ENCODE measurements at regions of chr2 and their contacts with region 1.

Region 1: GRCh38 chr2:134118279-134119116 is 135.4 kb upstream of the MGAT5 start:
- DNase-seq: peak; percentile 96
- ATAC-seq: peak; percentile 62
- H3K4me3 ChIP-seq: peak overlapping the region; percentile 92
- H3K27ac ChIP-seq: peak overlapping the region; percentile 77
- H3K4me1 ChIP-seq: peaks cover 19% of the 10 kb centered on the region
- H3K27me3 ChIP-seq: no peaks in the 10 kb centered on the region
- CTCF ChIP-seq: peak; percentile 58 to 91 (median 80); a peak in 5 of 6 replicates
- EP300 ChIP-seq: peak; percentile 80 to 88
- POLR2A ChIP-seq: no peak
- RAD21 ChIP-seq: peak; percentile 99

Region 2: DNA sequence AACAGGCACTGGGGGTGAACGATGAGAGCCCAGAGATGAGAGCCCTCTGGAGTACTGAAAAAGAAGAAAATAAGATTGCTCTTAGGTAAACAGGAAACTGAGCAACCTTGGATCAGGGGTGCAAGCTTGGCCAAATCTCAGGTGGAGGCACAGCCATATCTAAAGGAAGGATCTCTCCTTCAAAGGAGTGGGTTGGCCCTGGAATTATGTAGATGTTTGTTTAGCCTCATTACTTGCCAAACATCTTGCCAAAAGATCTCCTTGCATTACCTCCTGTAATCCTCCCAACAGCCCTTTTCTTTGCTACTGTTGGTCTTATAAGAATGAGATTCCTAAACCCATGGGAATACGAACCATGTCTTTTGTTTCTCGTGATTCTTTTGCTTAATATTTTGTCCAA is 217.6 kb before region 1 on chr2:
- CTCF ChIA-PET with region 1: no interaction called
- POLR2A ChIA-PET with region 1: no interaction called
- RAD21 ChIA-PET with region 1: no interaction called
- SMC1A ChIA-PET with region 1: no interaction called
- in situ Hi-C with region 1: no loop called
- intact Hi-C with region 1: no loop called
- DNase-seq: no peak
- ATAC-seq: no peak
- H3K4me3 ChIP-seq: no peak overlapping the region
- H3K27ac ChIP-seq: no peak overlapping the region
- H3K4me1 ChIP-seq: no peaks in the 10 kb centered on the region
- H3K27me3 ChIP-seq: no peaks in the 10 kb centered on the region
- CTCF ChIP-seq: no peak
- EP300 ChIP-seq: no peak
- POLR2A ChIP-seq: no peak
- RAD21 ChIP-seq: no peak

Region 3: DNA sequence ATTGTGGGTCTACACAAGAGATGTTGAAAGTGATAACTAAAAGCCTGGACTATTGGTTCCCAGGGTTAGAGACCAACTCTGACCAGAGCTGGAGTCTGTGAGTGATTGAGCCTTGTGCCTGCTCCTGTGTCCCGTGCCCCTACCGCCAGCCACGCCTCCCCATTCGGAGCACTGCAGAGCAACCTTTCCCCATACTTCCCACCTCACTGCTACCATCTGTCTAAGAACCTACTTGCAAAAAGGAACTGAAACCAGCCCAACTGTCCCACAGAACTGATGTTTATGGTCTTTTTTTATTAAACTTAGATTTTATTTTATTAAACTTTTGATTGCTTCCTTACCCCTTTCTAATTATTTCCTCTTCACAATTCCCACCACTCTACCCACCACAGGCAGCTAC is 165.0 kb before region 1 on chr2:
- CTCF ChIA-PET with region 1: interaction called, 3 read pairs
- POLR2A ChIA-PET with region 1: no interaction called
- RAD21 ChIA-PET with region 1: interaction called, 7 read pairs
- SMC1A ChIA-PET with region 1: interaction called, 3 read pairs
- in situ Hi-C with region 1: no loop called
- intact Hi-C with region 1: loop called (anchors 2 kb)
- DNase-seq: peak; percentile 51
- ATAC-seq: peak; percentile 81
- H3K4me3 ChIP-seq: no peak overlapping the region
- H3K27ac ChIP-seq: peak overlapping the region; percentile 27; the same call in 1 of the 2 replicates
- H3K4me1 ChIP-seq: peaks cover 46% of the 10 kb centered on the region
- H3K27me3 ChIP-seq: no peaks in the 10 kb centered on the region
- CTCF ChIP-seq: no peak
- EP300 ChIP-seq: no peak
- POLR2A ChIP-seq: no peak
- RAD21 ChIP-seq: no peak

Region 4: DNA sequence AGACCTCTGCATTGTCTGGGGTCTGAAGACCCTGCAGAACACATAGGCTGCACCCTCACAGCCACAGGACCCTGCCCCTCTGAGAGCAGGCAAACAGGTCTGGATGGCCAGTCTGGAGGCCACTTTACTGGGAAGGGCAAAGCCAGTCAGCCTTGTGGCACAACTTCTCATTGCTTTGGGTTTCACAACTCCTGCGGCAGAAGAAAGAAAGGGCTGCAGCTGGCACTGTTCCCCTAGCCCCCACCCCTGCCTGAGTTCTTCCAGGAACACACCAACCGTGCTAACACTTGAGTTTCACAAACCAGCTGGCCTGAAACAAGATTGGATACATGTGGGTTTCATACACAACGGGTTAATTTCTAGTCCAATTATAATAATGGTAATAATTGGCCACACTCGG is 141.1 kb before region 1 on chr2:
- CTCF ChIA-PET with region 1: no interaction called
- POLR2A ChIA-PET with region 1: no interaction called
- RAD21 ChIA-PET with region 1: no interaction called
- SMC1A ChIA-PET with region 1: no interaction called
- in situ Hi-C with region 1: no loop called
- intact Hi-C with region 1: no loop called
- DNase-seq: no peak
- ATAC-seq: no peak
- H3K4me3 ChIP-seq: no peak overlapping the region
- H3K27ac ChIP-seq: no peak overlapping the region
- H3K4me1 ChIP-seq: no peaks in the 10 kb centered on the region
- H3K27me3 ChIP-seq: no peaks in the 10 kb centered on the region; a peak in 1 of 4 replicates
- CTCF ChIP-seq: no peak
- EP300 ChIP-seq: no peak
- POLR2A ChIP-seq: no peak
- RAD21 ChIP-seq: no peak

Region 5: DNA sequence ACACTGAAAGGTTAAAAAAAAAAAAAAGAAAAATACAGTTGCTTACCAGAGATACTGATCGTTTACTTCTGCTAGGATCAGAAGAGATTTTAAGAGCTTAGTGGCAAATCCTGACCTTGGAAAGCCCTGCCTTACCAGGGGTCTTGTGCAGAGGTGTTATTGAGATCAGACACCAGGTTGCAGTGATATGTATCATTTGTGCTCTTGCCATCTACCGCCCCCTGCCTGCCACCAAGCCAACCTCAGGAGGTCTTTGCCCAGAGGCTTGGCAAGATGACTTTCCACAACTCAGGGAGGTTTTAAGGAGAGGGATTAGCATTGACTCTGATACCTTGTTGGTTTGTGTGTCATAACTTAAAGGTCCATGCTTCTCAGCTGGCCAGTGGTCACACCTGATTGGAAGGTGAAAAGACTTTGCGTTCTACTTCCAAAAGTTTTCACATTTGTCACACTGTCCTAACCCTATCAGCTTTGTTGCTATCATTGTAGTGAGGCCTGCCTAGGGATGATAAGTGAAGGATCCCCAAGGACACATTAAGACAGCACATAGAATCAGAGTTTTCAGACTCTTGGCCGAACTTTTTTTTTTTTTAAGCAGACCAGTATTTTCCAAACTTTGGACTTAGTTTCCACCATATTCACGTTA is 89.2 kb after region 1 on chr2:
- CTCF ChIA-PET with region 1: interaction called, 164 read pairs
- POLR2A ChIA-PET with region 1: interaction called, 4 read pairs
- RAD21 ChIA-PET with region 1: interaction called, 86 read pairs
- SMC1A ChIA-PET with region 1: interaction called, 84 read pairs
- in situ Hi-C with region 1: loop called (anchors 5 kb)
- intact Hi-C with region 1: loop called (anchors 5 kb)
- DNase-seq: no peak
- ATAC-seq: peak; percentile 99
- H3K4me3 ChIP-seq: no peak overlapping the region
- H3K27ac ChIP-seq: no peak overlapping the region
- H3K4me1 ChIP-seq: peaks cover 33% of the 10 kb centered on the region
- H3K27me3 ChIP-seq: no peaks in the 10 kb centered on the region
- CTCF ChIP-seq: peak; percentile 75 to 79 (median 78)
- EP300 ChIP-seq: no peak
- POLR2A ChIP-seq: no peak
- RAD21 ChIP-seq: peak; percentile 88

Region 6: GRCh38 chr2:134245340-134245984 is 127.0 kb after region 1 on chr2:
- CTCF ChIA-PET with region 1: interaction called, 173 read pairs
- POLR2A ChIA-PET with region 1: interaction called, 9 read pairs
- RAD21 ChIA-PET with region 1: interaction called, 113 read pairs
- SMC1A ChIA-PET with region 1: interaction called, 100 read pairs
- in situ Hi-C with region 1: loop called (anchors 5 kb)
- intact Hi-C with region 1: loop called (anchors 1 kb)
- DNase-seq: no peak
- ATAC-seq: peak; percentile 65
- H3K4me3 ChIP-seq: no peak overlapping the region; the same call in 1 of the 2 replicates
- H3K27ac ChIP-seq: peak overlapping the region; percentile 54
- H3K4me1 ChIP-seq: peaks cover 66% of the 10 kb centered on the region
- H3K27me3 ChIP-seq: no peaks in the 10 kb centered on the region
- CTCF ChIP-seq: peak; percentile 78 to 86 (median 80)
- EP300 ChIP-seq: no peak
- POLR2A ChIP-seq: no peak
- RAD21 ChIP-seq: peak; percentile 75

Region 7: GRCh38 chr2:134275058-134275862 is 156.8 kb after region 1 on chr2:
- CTCF ChIA-PET with region 1: interaction called, 14 read pairs
- POLR2A ChIA-PET with region 1: no interaction called
- RAD21 ChIA-PET with region 1: interaction called, 15 read pairs
- SMC1A ChIA-PET with region 1: interaction called, 21 read pairs
- in situ Hi-C with region 1: no loop called
- intact Hi-C with region 1: no loop called
- DNase-seq: peak; percentile 95
- ATAC-seq: peak; percentile 89
- H3K4me3 ChIP-seq: peak overlapping the region; percentile 31; the same call in 1 of the 2 replicates
- H3K27ac ChIP-seq: peak overlapping the region; percentile 88
- H3K4me1 ChIP-seq: peaks cover 91% of the 10 kb centered on the region
- H3K27me3 ChIP-seq: no peaks in the 10 kb centered on the region
- CTCF ChIP-seq: no peak
- EP300 ChIP-seq: peak; percentile 94 to 97
- POLR2A ChIP-seq: no peak
- RAD21 ChIP-seq: no peak; the same call in 1 of the 2 replicates

Region 8: GRCh38 chr2:134352844-134353243 is 234.3 kb after region 1 on chr2:
- CTCF ChIA-PET with region 1: interaction called, 4 read pairs
- POLR2A ChIA-PET with region 1: no interaction called
- RAD21 ChIA-PET with region 1: no interaction called
- SMC1A ChIA-PET with region 1: interaction called, 7 read pairs
- in situ Hi-C with region 1: no loop called
- intact Hi-C with region 1: loop called (anchors 5 kb)
- DNase-seq: no peak
- ATAC-seq: no peak
- H3K4me3 ChIP-seq: no peak overlapping the region
- H3K27ac ChIP-seq: no peak overlapping the region
- H3K4me1 ChIP-seq: peaks cover 3% of the 10 kb centered on the region; the same call in 1 of the 2 replicates
- H3K27me3 ChIP-seq: no peaks in the 10 kb centered on the region
- CTCF ChIP-seq: no peak
- EP300 ChIP-seq: no peak
- POLR2A ChIP-seq: no peak
- RAD21 ChIP-seq: no peak

Region 9: DNA sequence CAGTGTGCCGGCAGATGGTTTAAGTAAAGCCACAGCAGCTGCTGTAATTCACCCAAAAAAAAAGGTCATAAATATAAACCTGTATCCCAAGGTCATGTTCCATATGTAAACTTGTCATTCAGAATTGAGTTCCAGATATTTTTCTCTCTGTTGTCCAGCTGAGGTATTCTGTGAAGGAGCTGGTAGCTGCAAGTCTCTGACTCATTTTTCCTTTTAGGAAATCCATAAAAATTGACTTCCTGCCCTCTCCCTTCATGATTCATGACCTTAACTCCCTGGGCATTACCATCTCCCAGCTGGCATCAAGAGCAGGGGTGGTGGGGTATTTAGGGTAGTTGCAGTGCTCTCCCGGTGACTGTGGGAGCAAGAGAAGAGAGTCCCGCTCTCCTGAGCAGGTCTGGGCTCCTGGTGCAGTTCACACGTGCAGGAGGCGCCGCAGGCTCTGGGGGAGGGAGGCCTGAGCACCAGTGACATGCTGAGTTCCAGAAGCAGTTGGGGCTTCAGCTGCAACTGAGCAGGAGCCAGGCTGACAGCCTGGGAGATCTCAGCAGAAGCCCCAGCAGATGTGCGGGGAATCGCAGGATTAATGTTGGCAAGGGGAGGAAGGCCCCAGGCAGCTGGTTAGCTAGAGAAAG is 328.0 kb after region 1 on chr2:
- CTCF ChIA-PET with region 1: interaction called, 32 read pairs
- POLR2A ChIA-PET with region 1: no interaction called
- RAD21 ChIA-PET with region 1: interaction called, 12 read pairs
- SMC1A ChIA-PET with region 1: interaction called, 17 read pairs
- in situ Hi-C with region 1: no loop called
- intact Hi-C with region 1: loop called (anchors 2 kb)
- DNase-seq: no peak
- ATAC-seq: no peak
- H3K4me3 ChIP-seq: no peak overlapping the region
- H3K27ac ChIP-seq: no peak overlapping the region
- H3K4me1 ChIP-seq: no peaks in the 10 kb centered on the region
- H3K27me3 ChIP-seq: no peaks in the 10 kb centered on the region
- CTCF ChIP-seq: no peak
- EP300 ChIP-seq: no peak
- POLR2A ChIP-seq: no peak
- RAD21 ChIP-seq: no peak

Measured in GM12878 (cell line).